ENCODE measurements at regions of chr2 and their contacts with region 1.

Region 1: DNA sequence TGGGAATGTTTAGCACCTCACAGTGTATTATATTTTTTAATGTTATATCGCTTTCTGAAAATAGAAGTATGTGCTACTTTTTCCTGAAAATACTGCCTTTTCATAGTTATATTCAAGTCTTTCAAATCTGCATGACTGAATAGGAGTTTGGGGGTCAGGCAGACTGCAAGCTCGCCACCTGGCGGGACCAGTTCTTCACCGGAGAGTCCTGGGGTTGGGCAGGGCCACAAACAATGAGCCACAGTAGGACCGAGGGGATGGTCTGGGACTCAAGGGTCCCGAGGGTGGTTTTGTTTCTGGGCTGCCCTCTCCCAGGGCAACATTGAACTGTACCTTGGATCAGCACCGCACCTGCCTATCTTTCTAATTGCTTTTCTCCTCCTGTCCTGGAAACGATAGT is 70.6 kb downstream of the VWA3B start:
- DNase-seq: no peak
- H3K4me3 ChIP-seq: no peak overlapping the region
- H3K27ac ChIP-seq: no peak overlapping the region
- H3K4me1 ChIP-seq: peaks cover 2% of the 10 kb centered on the region
- H3K27me3 ChIP-seq: no peaks in the 10 kb centered on the region
- CTCF ChIP-seq: no peak
- EP300 ChIP-seq: no peak
- POLR2A ChIP-seq: no peak

Region 2: GRCh38 chr2:97995734-97996624 is 161.6 kb before region 1 on chr2 and contains the start of gene TMEM131:
- intact Hi-C with region 1: loop called in 1 of 4 experiments (anchors 10 kb)
- DNase-seq: peak; percentile 92 to 96 (median 95)
- H3K4me3 ChIP-seq: peak within 1 kb of the TSS; percentile 75
- H3K27ac ChIP-seq: peak within 1 kb of the TSS; percentile 95 to 99
- H3K4me1 ChIP-seq: peaks cover 6% of the 10 kb centered on the region
- H3K27me3 ChIP-seq: no peaks in the 10 kb centered on the region
- CTCF ChIP-seq: no peak
- EP300 ChIP-seq: no peak
- POLR2A ChIP-seq: no peak
- total RNA-seq, gene TMEM131: 29.3 to 44.0 (median 38.4) TPM

Region 3: DNA sequence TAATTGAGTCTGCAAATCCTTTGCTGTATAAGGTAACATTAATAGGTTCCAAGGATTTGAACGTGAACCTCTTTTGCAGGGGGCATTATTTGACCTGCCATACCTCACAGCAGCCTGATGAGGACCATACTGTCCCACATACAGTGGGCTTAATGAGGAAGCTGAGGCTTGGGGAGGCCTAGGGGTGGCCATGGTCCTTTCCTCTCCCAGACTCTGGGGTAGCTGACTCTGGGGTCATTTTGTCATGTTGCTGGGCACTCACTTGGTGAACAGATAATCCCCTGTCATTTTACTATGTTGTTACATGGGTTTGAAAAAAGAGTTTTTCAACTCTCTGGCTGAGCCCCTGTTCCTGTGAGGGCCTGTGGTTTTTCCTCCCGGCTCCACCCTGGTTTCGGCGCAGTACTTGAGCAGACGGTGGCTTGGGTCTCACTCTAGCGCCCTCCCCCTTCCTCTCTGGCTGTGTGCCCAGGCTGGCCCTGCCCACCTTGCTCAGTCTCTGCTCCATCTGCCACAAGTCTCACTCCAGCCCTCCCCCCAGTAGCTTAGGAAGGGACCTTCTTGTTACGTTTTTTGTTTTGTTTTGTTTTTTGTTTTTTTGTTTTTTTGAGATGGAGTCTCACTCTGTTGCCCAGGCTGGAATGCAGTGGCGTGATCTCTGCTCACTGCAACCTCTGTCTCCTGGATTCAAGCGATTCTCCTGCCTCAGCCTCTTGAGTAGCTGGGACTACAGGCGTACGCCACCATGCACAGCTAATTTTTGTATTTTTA is 308.1 kb after region 1 on chr2:
- intact Hi-C with region 1: no loop called
- DNase-seq: peak in 3 of 5 donors; percentile 38 to 52 (median 44)
- H3K4me3 ChIP-seq: no peak overlapping the region
- H3K27ac ChIP-seq: no peak overlapping the region
- H3K4me1 ChIP-seq: peaks cover 3% of the 10 kb centered on the region
- H3K27me3 ChIP-seq: no peaks in the 10 kb centered on the region
- CTCF ChIP-seq: no peak
- EP300 ChIP-seq: no peak
- POLR2A ChIP-seq: no peak

Measured in ovary (tissue), 10 donors.